ENCODE measurements at regions of chr22 and their contacts with region 1.

Region 1: GRCh38 chr22:38051900-38052862 is 5.0 kb upstream of the PICK1 start:
- DNase-seq: peak; percentile 57 to 81
- ATAC-seq: peak; percentile 71 to 72
- H3K4me3 ChIP-seq: no peak overlapping the region
- H3K27ac ChIP-seq: no peak overlapping the region
- H3K4me1 ChIP-seq: peaks cover 5 to 7% of the 10 kb centered on the region in 2 donors
- H3K27me3 ChIP-seq: no peaks in the 10 kb centered on the region
- CTCF ChIP-seq: peak; percentile 88 to 96 (median 93)
- POLR2A ChIP-seq: no peak

Region 2: DNA sequence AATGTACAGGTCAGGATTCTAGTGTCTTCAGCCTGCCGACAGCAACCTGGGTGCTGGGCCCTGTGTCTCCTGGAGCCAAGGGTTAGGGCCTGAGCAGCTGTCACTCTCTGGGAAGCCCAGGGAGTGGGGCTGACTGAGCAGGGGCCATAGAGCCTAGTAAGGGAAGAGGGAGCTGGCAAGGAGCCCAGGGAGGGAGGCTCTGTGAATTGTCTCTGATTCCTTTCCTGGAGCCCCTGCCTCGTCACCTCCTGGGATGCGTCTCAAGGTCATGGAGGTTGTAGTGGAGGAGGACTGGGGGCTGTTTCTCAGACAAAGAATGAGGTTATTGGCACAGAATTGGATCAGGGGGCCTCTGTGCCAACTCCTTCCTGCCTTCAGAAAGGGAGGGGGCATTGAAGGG is 79.7 kb before region 1 on chr22:
- in situ Hi-C with region 1: no loop called
- intact Hi-C with region 1: no loop called
- DNase-seq: no peak
- ATAC-seq: no peak
- H3K4me3 ChIP-seq: no peak overlapping the region
- H3K27ac ChIP-seq: no peak overlapping the region
- H3K4me1 ChIP-seq: no peaks in the 10 kb centered on the region
- H3K27me3 ChIP-seq: no peaks in the 10 kb centered on the region
- CTCF ChIP-seq: no peak
- POLR2A ChIP-seq: no peak

Region 3: GRCh38 chr22:38104084-38104483 is 51.9 kb after region 1 on chr22:
- in situ Hi-C with region 1: loop called in 2 of 4 experiments (anchors 10 kb)
- intact Hi-C with region 1: loop called (anchors 1 kb)
- DNase-seq: peak in 1 of 2 donors; percentile 54
- ATAC-seq: peak; percentile 64 to 89
- H3K4me3 ChIP-seq: no peak overlapping the region
- H3K27ac ChIP-seq: no peak overlapping the region
- H3K4me1 ChIP-seq: no peaks in the 10 kb centered on the region
- H3K27me3 ChIP-seq: no peaks in the 10 kb centered on the region
- CTCF ChIP-seq: peak; percentile 39 to 64 (median 61)
- POLR2A ChIP-seq: no peak